ENCODE measurements at regions of chr3 and their contacts with region 1.

Region 1: DNA sequence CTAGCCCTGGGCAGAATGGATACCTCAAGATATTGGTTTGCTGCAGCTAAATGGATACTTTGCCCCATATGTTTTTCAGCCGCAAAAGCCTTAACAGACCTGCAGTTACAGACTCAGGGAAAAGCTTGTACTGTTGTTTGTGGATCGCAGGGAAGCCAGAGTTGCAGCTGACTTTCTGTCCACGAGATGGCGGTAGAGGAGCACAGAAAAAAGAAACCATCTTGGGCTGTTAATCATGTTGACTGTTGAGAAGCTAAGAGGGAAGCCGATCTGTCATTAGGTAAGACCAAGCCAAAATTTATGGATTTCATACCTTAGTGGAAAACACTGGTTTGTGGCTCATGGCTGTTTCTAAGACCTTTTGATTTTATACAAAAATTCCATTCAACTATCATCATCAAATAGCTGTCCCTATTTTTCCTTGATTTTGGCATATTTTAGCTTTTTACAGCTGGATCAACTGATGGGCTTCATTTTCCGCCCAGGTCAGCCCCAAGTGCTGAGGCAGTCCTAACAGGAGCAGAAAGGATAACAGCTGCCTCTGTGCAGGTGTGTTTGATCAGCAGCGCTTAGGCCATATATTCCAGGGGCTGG is 205.7 kb upstream of the ZPLD1 start:
- DNase-seq: peak; percentile 97

Region 2: GRCh38 chr3:101809178-101810021 is 419.8 kb before region 1 on chr3:
- in situ Hi-C with region 1: loop called (anchors 10 kb)
- DNase-seq: peak; percentile 58

Region 3: GRCh38 chr3:102536456-102536855 is 307.3 kb after region 1 on chr3:
- in situ Hi-C with region 1: loop called (anchors 25 kb)
- DNase-seq: peak; percentile 51

Measured in KBM-7 (cell line).